CD4-positive, alpha-beta T cell (primary cell): ENCODE measurements at regions of chr5 and their contacts with region 1.

Region 1: DNA sequence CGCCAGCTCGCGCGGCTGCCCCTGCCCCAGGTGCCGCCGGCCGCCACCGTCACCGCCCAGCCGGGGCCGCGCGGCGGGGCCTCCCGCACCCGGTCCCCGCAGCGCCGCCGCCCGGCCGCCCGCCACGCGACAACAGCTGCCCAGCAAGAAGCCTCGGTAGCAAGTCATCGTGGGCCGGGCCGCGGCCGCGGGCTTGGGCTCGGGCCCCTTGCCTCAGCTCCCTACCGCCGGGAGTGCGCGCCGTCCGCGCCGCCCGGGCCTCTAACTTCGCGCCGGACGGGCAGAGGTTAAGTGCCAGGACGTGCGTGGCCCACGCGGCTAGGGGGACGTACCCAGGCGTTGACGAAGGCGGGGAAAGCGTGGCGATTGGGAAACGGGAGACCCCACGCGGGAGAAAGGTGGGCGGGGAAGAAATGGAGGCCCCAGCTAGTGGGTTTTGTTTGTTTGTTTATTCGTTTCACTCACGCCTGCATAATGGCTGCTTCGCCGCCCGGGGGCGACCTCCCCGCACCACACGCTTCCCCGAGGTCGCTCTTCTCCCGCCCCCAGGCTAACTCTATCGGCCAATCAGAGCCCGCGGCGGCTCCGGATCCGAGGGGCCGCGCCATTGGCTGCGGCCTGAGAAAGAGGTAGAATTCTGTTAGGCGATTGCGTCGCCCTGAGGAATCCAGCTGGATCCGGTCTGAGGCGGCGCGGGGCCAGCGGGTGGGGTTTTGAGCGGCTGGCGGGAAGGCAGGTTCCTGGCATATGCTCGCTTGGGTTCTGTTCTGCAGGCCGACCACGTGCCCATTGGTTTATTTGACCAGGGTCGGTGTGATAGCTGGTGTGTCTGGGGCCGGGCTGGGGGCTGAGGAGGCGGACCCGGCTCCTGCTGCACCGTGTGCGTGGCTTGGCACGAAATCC is at the start of gene NADK2:
- DNase-seq: peak; percentile 85 to 98 (median 89)
- ATAC-seq: peak; percentile 87
- H3K4me3 ChIP-seq: peak within 1 kb of the TSS; percentile 85
- H3K4me3 Mint-ChIP-seq: peak within 1 kb of the TSS; percentile 94
- H3K27ac ChIP-seq: peak within 1 kb of the TSS; percentile 85 to 91
- H3K27ac Mint-ChIP-seq: peak within 1 kb of the TSS; percentile 96
- H3K4me1 ChIP-seq: peaks cover 22% of the 10 kb centered on the region
- H3K4me1 Mint-ChIP-seq: peaks cover 56% of the 10 kb centered on the region
- H3K27me3 ChIP-seq: no peaks in the 10 kb centered on the region
- H3K27me3 Mint-ChIP-seq: no peaks in the 10 kb centered on the region
- CTCF ChIP-seq: peak; percentile 71
- total RNA-seq, gene NADK2: 12.5 to 13.3 TPM

Region 2: GRCh38 chr5:34915139-34915855 is 1326.6 kb before region 1 on chr5 and contains the starts of genes BRIX1 and RAD1:
- CTCF ChIA-PET with region 1: no interaction called
- POLR2A ChIA-PET with region 1: interaction called, 11 read pairs
- intact Hi-C with region 1: loop called in 1 of 2 experiments (anchors 10 kb)
- DNase-seq: peak; percentile 87 to 97 (median 90)
- ATAC-seq: peak; percentile 96
- H3K4me3 ChIP-seq: peak within 1 kb of the TSS; percentile 91
- H3K4me3 Mint-ChIP-seq: peak within 1 kb of the TSS; percentile 77
- H3K27ac ChIP-seq: peak within 1 kb of the TSS; percentile 84 to 88
- H3K27ac Mint-ChIP-seq: no peak within 1 kb of the TSS
- H3K4me1 ChIP-seq: peaks cover 27% of the 10 kb centered on the region
- H3K4me1 Mint-ChIP-seq: peaks cover 35% of the 10 kb centered on the region
- H3K27me3 ChIP-seq: no peaks in the 10 kb centered on the region
- H3K27me3 Mint-ChIP-seq: no peaks in the 10 kb centered on the region
- CTCF ChIP-seq: no peak
- total RNA-seq, gene BRIX1: 29.7 to 30.2 TPM
- total RNA-seq, gene RAD1: 26.7 to 29.2 TPM

Region 3: GRCh38 chr5:35617435-35618303 is 624.2 kb before region 1 on chr5 and contains the start of gene SPEF2:
- CTCF ChIA-PET with region 1: interaction called, 4 read pairs
- POLR2A ChIA-PET with region 1: no interaction called
- intact Hi-C with region 1: loop called in 1 of 2 experiments (anchors 10 kb)
- DNase-seq: peak; percentile 55 to 90 (median 68)
- ATAC-seq: peak; percentile 84
- H3K4me3 ChIP-seq: peak within 1 kb of the TSS; percentile 79
- H3K4me3 Mint-ChIP-seq: peak within 1 kb of the TSS; percentile 93
- H3K27ac ChIP-seq: peak within 1 kb of the TSS; percentile 11 to 27
- H3K27ac Mint-ChIP-seq: peak within 1 kb of the TSS; percentile 88
- H3K4me1 ChIP-seq: peaks cover 15% of the 10 kb centered on the region
- H3K4me1 Mint-ChIP-seq: peaks cover 33% of the 10 kb centered on the region
- H3K27me3 ChIP-seq: no peaks in the 10 kb centered on the region
- H3K27me3 Mint-ChIP-seq: no peaks in the 10 kb centered on the region
- CTCF ChIP-seq: peak; percentile 76
- total RNA-seq, gene SPEF2: 3.2 TPM

Region 4: GRCh38 chr5:36052538-36052937 is 189.3 kb before region 1 on chr5:
- CTCF ChIA-PET with region 1: no interaction called
- POLR2A ChIA-PET with region 1: no interaction called
- intact Hi-C with region 1: no loop called
- DNase-seq: no peak
- ATAC-seq: no peak
- H3K4me3 ChIP-seq: no peak overlapping the region
- H3K4me3 Mint-ChIP-seq: no peak overlapping the region
- H3K27ac ChIP-seq: no peak overlapping the region
- H3K27ac Mint-ChIP-seq: no peak overlapping the region
- H3K4me1 ChIP-seq: no peaks in the 10 kb centered on the region
- H3K4me1 Mint-ChIP-seq: no peaks in the 10 kb centered on the region
- H3K27me3 ChIP-seq: no peaks in the 10 kb centered on the region
- H3K27me3 Mint-ChIP-seq: peaks cover 8% of the 10 kb centered on the region
- CTCF ChIP-seq: no peak

Region 5: DNA sequence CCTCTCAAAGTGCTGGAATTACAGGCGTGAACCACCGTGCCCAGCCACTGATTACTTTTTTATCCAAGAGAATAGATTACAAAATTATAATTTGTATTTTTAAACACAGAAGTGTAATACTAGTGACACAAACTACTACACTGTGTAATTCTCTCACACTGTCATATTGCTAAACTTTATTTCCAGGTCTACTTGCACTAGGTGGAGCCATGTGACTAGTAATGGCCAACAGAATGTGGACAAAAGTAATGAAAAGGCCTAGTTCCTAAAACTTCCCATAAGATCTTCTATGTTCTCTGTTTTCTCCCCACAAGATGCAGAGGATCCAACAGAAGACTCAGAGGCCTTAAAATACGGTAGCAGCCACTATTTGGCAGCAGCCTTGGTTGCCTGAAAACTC is 27.4 kb before region 1 on chr5:
- CTCF ChIA-PET with region 1: interaction called, 8 read pairs
- POLR2A ChIA-PET with region 1: interaction called, 10 read pairs
- intact Hi-C with region 1: no loop called
- DNase-seq: peak in 2 of 14 experiments; percentile 9
- ATAC-seq: no peak
- H3K4me3 ChIP-seq: no peak overlapping the region
- H3K4me3 Mint-ChIP-seq: no peak overlapping the region
- H3K27ac ChIP-seq: no peak overlapping the region
- H3K27ac Mint-ChIP-seq: no peak overlapping the region
- H3K4me1 ChIP-seq: no peaks in the 10 kb centered on the region
- H3K4me1 Mint-ChIP-seq: no peaks in the 10 kb centered on the region
- H3K27me3 ChIP-seq: no peaks in the 10 kb centered on the region
- H3K27me3 Mint-ChIP-seq: no peaks in the 10 kb centered on the region
- CTCF ChIP-seq: peak; percentile 35

Region 6: GRCh38 chr5:36252722-36253365 is 11.0 kb after region 1 on chr5:
- CTCF ChIA-PET with region 1: interaction called, 15 read pairs
- POLR2A ChIA-PET with region 1: interaction called, 5 read pairs
- intact Hi-C with region 1: no loop called
- DNase-seq: no peak
- ATAC-seq: no peak
- H3K4me3 ChIP-seq: no peak overlapping the region
- H3K4me3 Mint-ChIP-seq: no peak overlapping the region
- H3K27ac ChIP-seq: no peak overlapping the region
- H3K27ac Mint-ChIP-seq: no peak overlapping the region
- H3K4me1 ChIP-seq: no peaks in the 10 kb centered on the region
- H3K4me1 Mint-ChIP-seq: no peaks in the 10 kb centered on the region
- H3K27me3 ChIP-seq: peaks cover 0 to 4% of the 10 kb centered on the region in 2 experiments
- H3K27me3 Mint-ChIP-seq: no peaks in the 10 kb centered on the region
- CTCF ChIP-seq: no peak

Region 7: DNA sequence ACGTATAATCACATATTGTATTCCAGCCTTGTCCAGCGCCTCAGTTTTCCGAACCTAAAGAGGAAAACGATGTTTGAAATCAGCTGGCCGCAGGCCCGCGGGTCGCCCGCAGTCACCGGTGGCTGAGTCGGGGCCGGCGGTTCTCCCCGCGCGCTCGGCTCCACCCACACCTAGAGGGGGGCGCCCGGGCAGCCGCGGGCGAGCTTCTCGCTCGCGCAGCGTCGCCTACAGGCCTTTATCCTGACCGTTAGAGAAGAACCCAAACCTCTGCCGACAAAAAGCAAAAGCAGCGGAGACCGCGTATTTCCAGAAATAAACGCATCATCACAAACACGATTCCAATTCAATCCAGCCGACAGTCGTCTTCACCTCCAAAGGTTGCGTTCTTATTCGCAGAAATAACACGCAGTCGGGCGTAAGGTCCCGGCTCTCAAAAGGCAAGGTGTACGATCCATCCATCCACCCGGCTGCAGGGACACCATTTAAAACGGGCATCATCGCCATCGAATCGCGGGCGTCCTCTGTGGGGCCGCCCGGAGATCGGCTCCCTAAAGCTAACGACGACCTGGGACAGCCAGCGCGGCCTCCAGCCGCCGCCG is 634.0 kb after region 1 on chr5:
- CTCF ChIA-PET with region 1: no interaction called
- POLR2A ChIA-PET with region 1: interaction called, 12 read pairs
- intact Hi-C with region 1: loop called (anchors 1 to 5 kb)
- DNase-seq: peak; percentile 53 to 90 (median 70)
- ATAC-seq: peak; percentile 48
- H3K4me3 ChIP-seq: peak overlapping the region; percentile 94
- H3K4me3 Mint-ChIP-seq: peak overlapping the region; percentile 91
- H3K27ac ChIP-seq: peak overlapping the region; percentile 83 to 96
- H3K27ac Mint-ChIP-seq: peak overlapping the region; percentile 91
- H3K4me1 ChIP-seq: peaks cover 15% of the 10 kb centered on the region
- H3K4me1 Mint-ChIP-seq: peaks cover 57% of the 10 kb centered on the region
- H3K27me3 ChIP-seq: no peaks in the 10 kb centered on the region
- H3K27me3 Mint-ChIP-seq: no peaks in the 10 kb centered on the region
- CTCF ChIP-seq: peak; percentile 66